Naive thymus-derived CD4-positive, alpha-beta T cell (primary cell): ENCODE measurements at regions of chr11 and their contacts with region 1.

Region 1: DNA sequence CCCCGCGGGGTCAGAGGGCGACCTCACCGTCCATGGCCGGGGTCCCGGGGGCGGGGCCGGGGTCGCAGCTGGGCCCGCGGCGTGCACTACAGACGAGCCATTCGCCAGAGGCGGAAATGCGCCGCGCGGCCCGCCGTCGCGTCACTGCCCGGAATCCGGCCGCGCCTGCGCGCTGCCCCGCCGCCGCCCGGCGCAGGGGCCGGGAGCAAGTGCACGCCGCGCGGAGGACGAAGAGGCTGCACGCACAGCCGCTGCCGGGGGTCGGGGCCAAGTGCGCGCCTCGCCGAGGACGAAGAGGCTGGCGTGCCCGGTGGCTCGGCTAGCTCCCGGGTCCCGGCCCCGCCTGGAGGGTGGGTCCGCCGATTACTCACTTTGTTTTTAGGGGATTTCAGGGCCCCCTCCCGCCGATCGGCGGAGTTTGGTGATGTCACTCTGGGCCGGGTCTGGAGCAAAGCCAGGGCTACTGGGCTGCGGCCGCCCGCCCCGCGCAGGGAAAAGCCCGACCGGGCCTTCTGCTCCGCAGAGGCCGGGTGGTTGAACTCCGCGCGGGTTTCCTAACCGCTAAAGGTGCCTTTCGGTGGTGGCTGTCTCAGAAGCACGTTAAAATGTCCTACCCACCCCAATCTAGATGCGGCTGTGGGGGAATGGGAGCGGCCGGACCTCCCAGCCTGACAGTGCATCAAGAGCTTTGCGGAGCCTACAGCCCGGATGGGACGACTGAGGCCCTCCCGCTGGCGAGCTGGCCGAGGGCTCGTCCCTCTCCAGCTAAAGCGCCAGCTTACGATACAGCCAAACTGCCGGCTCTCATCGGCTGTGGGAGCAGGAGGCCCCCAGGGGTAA is at the start of gene RELA:
- DNase-seq: peak; percentile 84 to 92 (median 89)
- ATAC-seq: peak; percentile 92
- H3K4me3 ChIP-seq: peak within 1 kb of the TSS; percentile 85
- H3K4me3 Mint-ChIP-seq: peak within 1 kb of the TSS; percentile 86 to 93 (median 90)
- H3K27ac ChIP-seq: peak within 1 kb of the TSS; percentile 99
- H3K27ac Mint-ChIP-seq: peak within 1 kb of the TSS; percentile 86 to 95 (median 92)
- H3K4me1 ChIP-seq: peaks cover 20 to 33% of the 10 kb centered on the region in 2 donors
- H3K4me1 Mint-ChIP-seq: peaks cover 10 to 43% (median 31%) of the 10 kb centered on the region in 7 donors
- H3K27me3 ChIP-seq: no peaks in the 10 kb centered on the region
- H3K27me3 Mint-ChIP-seq: no peaks in the 10 kb centered on the region
- total RNA-seq, gene RELA: 106 to 303 (median 165) TPM

Region 2: DNA sequence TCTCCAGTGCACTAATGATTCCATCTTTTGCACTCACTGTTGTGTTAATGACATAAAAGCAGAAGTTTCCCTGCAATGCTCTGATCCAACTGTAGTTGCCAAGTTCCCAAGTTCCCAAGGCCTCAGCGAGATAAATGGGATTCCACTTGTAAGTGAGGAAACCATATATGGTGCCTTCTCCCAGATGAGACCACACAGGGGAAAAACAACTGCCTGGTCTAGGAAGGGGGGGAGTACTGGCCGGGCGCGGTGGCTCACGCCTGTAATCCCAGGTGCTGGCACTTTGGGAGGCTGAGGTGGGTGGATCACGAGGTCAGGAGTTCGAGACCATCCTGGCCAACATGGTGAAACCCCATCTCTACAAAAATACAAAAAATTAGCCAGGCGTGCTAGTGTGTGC is 23.0 kb after region 1 on chr11:
- CTCF ChIA-PET with region 1: no interaction called
- POLR2A ChIA-PET with region 1: no interaction called
- intact Hi-C with region 1: no loop called
- DNase-seq: no peak
- ATAC-seq: no peak
- H3K4me3 ChIP-seq: no peak overlapping the region
- H3K4me3 Mint-ChIP-seq: no peak overlapping the region
- H3K27ac ChIP-seq: no peak overlapping the region
- H3K27ac Mint-ChIP-seq: no peak overlapping the region
- H3K4me1 ChIP-seq: no peaks in the 10 kb centered on the region
- H3K4me1 Mint-ChIP-seq: no peaks in the 10 kb centered on the region
- H3K27me3 ChIP-seq: no peaks in the 10 kb centered on the region
- H3K27me3 Mint-ChIP-seq: peaks cover 0 to 27% (median 0%) of the 10 kb centered on the region in 5 donors

Region 3: GRCh38 chr11:65919146-65920033 is 256.4 kb after region 1 on chr11 and contains the start of gene DRAP1:
- CTCF ChIA-PET with region 1: no interaction called
- POLR2A ChIA-PET with region 1: no interaction called
- intact Hi-C with region 1: loop called (anchors 1 kb)
- DNase-seq: peak; percentile 95 to 98 (median 97)
- ATAC-seq: peak; percentile 93
- H3K4me3 ChIP-seq: peak within 1 kb of the TSS; percentile 83
- H3K4me3 Mint-ChIP-seq: peak within 1 kb of the TSS; percentile 86 to 96 (median 93)
- H3K27ac ChIP-seq: peak within 1 kb of the TSS; percentile 95
- H3K27ac Mint-ChIP-seq: peak within 1 kb of the TSS; percentile 79 to 96 (median 90)
- H3K4me1 ChIP-seq: peaks cover 26 to 28% of the 10 kb centered on the region in 2 donors
- H3K4me1 Mint-ChIP-seq: peaks cover 32 to 61% (median 36%) of the 10 kb centered on the region in 7 donors
- H3K27me3 ChIP-seq: no peaks in the 10 kb centered on the region
- H3K27me3 Mint-ChIP-seq: no peaks in the 10 kb centered on the region
- total RNA-seq, gene DRAP1: 72.6 to 166 (median 81.9) TPM